Heart right ventricle (tissue), 16 donors: ENCODE measurements at regions of chrX and their contacts with region 1.

Region 1: GRCh38 chrX:39814391-39814790 is 283.4 kb downstream of the BCOR start:
- DNase-seq: no peak
- ATAC-seq: peak in 5 of 8 donors; percentile 38 to 57 (median 41)
- H3K4me3 ChIP-seq: no peak overlapping the region
- H3K27ac ChIP-seq: peak overlapping the region in 7 of 10 donors; percentile 22 to 68 (median 39)
- H3K4me1 ChIP-seq: peaks cover 0 to 17% (median 10%) of the 10 kb centered on the region in 9 donors
- H3K27me3 ChIP-seq: peaks cover 0 to 30% (median 0%) of the 10 kb centered on the region in 7 donors
- CTCF ChIP-seq: peak; percentile 18 to 60 (median 51)

Region 2: GRCh38 chrX:39652336-39653131 is 161.9 kb before region 1 on chrX:
- intact Hi-C with region 1: loop called in 1 of 10 experiments (anchors 10 kb)
- DNase-seq: no peak
- ATAC-seq: no peak
- H3K4me3 ChIP-seq: no peak overlapping the region
- H3K27ac ChIP-seq: no peak overlapping the region
- H3K4me1 ChIP-seq: no peaks in the 10 kb centered on the region
- H3K27me3 ChIP-seq: peaks cover 0 to 57% (median 0%) of the 10 kb centered on the region in 7 donors
- CTCF ChIP-seq: peak in 8 of 9 donors; percentile 18 to 58 (median 46)

Region 3: DNA sequence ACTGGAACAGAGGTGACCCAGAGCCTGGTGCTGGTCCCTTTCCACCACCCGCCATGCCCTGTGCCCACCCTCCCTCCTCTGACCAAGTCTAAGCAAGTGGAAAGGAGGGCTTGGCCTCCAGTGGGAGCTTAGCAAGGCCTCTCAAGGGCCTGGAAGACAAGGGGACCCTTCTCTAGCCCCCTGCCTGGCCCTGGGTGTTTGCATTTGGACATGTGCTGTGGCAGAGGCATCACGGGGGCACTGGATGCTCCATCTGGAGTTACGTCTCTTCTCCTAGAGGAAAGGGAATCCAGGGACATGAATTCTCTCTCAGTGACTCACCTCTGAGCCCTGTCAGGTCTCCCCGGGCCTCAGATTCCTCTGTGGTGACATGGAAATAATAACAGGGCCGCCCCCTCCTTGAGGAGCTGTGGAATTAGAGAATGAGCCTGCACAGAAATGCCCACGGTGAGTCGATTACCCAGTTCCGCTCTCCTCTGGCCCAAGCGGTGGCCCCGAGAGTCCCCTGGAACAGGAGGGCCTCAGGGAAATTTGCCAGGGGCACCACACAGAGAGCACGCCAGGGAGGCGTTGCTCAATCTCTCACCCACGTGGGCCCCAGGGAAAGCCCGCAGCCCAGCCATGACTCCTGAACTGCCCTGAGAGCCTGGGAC is 93.7 kb after region 1 on chrX:
- intact Hi-C with region 1: loop called in 1 of 10 experiments (anchors 10 kb)
- DNase-seq: peak; percentile 44 to 54
- ATAC-seq: peak; percentile 80 to 94 (median 88)
- H3K4me3 ChIP-seq: no peak overlapping the region
- H3K27ac ChIP-seq: peak overlapping the region in 8 of 10 donors; percentile 25 to 70 (median 34)
- H3K4me1 ChIP-seq: peaks cover 0 to 37% (median 5%) of the 10 kb centered on the region in 9 donors
- H3K27me3 ChIP-seq: peaks cover 0 to 20% (median 0%) of the 10 kb centered on the region in 7 donors
- CTCF ChIP-seq: no peak

Region 4: DNA sequence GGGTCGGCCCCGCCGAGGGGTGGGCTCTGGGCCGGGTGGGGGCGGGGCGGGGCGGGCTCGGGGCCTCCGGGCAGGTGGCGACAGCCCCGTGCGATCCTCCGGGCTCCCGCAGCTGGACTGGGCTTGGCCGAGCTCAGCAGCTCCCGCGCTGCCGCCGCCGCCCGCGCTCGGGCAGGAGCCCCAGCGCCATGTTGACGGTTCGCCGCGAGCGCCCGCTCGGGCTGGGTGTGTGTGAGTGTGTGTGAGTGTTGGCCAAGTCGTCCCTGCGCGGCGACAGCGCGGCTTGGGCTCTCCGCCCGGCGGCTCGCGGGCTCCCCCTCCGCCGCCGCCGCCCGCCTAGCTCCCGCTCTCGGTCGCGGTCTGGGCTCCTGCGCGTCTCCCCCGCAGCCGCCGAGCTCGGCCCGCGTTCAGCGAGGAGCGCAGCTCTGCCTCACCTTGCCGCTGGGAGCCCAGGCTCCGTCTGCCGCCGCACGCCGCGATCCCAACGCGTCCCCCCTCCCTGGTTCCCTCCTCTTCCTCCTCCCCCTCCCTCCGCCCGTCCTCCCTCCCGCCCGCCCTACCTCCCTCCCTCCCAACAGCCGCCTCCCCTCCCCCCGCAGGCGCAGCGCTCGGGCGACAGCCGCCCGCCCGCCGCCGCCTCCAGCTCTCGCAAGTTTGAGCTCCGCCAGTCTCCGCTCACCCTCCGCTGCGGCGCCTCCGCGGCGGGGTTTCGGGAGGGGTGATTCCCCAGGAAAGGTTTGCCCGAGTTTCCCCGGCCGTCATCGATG is 283.3 kb after region 1 on chrX and contains the start of gene BCOR:
- intact Hi-C with region 1: loop called in 5 of 10 experiments (anchors 5 to 10 kb)
- DNase-seq: peak; percentile 72 to 80
- ATAC-seq: peak; percentile 26 to 63 (median 56)
- H3K4me3 ChIP-seq: peak within 1 kb of the TSS; percentile 70 to 88 (median 82)
- H3K27ac ChIP-seq: peak within 1 kb of the TSS; percentile 84 to 94 (median 92)
- H3K4me1 ChIP-seq: peaks cover 0 to 40% (median 17%) of the 10 kb centered on the region in 9 donors
- H3K27me3 ChIP-seq: peaks cover 0 to 99% (median 0%) of the 10 kb centered on the region in 7 donors
- CTCF ChIP-seq: peak in 1 of 9 donors; percentile 20
- total RNA-seq, gene BCOR: 12.4 to 27.2 (median 19.9) TPM

Region 5: DNA sequence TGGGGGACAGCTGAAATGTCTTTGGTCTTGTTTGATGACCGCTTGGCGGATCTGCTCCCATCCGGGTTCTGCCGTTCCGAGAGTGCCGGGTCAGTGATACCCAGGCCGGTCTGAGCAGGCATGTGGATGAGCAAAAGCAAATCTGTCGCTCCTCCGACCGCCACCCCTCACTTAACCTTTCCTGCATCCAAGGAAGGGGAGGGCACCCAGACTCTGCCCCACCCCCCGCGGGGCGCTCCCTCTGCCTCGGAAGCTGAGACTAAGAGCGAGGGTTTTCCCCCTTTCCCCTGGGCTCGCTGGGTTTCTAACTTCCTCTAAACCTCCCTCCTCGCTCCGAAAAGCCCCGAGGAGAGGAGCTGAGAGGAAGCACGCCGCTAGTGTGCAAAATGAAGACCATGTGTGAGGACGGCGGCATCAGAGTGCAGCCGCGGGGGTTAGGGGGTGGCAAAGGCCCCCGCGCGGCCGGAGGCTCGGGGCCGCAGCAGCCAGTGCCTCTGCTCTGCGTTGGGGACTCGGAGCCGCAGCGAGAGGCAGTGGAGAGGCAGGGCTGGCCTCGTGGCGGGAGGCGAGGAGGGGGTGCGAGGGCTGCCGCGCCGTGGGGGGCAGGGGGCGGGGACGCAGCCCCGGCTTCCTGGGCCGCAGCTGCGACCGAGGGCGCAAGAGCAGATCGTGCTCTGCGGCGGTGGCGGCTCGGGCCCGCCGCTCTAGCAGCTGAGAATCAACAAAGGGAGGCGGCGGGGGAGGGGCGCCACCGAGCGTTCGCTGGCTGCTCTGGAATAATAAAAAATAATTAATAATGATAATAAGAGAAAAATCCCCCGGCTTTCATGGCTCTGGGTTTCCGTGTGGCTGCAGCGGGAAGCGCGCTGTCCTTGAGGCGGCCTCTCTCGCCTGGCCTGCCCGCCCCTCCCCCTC is 339.2 kb after region 1 on chrX:
- intact Hi-C with region 1: loop called in 3 of 10 experiments (anchors 10 kb)
- DNase-seq: no peak
- ATAC-seq: peak; percentile 2 to 39 (median 28)
- H3K4me3 ChIP-seq: peak overlapping the region; percentile 32 to 56 (median 53)
- H3K27ac ChIP-seq: peak overlapping the region; percentile 21 to 89 (median 82)
- H3K4me1 ChIP-seq: peaks cover 6 to 66% (median 45%) of the 10 kb centered on the region in 9 donors
- H3K27me3 ChIP-seq: peaks cover 0 to 100% (median 0%) of the 10 kb centered on the region in 7 donors
- CTCF ChIP-seq: peak in 4 of 9 donors; percentile 6 to 41 (median 16)

Region 6: GRCh38 chrX:40175511-40176350 is 361.3 kb after region 1 on chrX:
- intact Hi-C with region 1: loop called in 2 of 10 experiments (anchors 5 to 10 kb)
- DNase-seq: peak; percentile 75 to 77
- ATAC-seq: peak; percentile 48 to 75 (median 59)
- H3K4me3 ChIP-seq: peak overlapping the region; percentile 47 to 70 (median 63)
- H3K27ac ChIP-seq: peak overlapping the region; percentile 90 to 99 (median 98)
- H3K4me1 ChIP-seq: peaks cover 0 to 60% (median 22%) of the 10 kb centered on the region in 9 donors
- H3K27me3 ChIP-seq: peaks cover 0 to 82% (median 0%) of the 10 kb centered on the region in 7 donors
- CTCF ChIP-seq: no peak